Heart left ventricle (tissue), 16 donors: ENCODE measurements at regions of chr22 and their contacts with region 1.

Region 1: GRCh38 chr22:46071451-46072109 is 78.7 kb upstream of the PPARA start:
- DNase-seq: peak; percentile 95 to 96 (median 95)
- ATAC-seq: peak; percentile 11 to 53 (median 46)
- H3K4me3 ChIP-seq: peak overlapping the region; percentile 69 to 97 (median 90)
- H3K27ac ChIP-seq: peak overlapping the region; percentile 97 to 100 (median 98)
- H3K4me1 ChIP-seq: peaks cover 2 to 66% (median 41%) of the 10 kb centered on the region in 12 donors
- H3K27me3 ChIP-seq: no peaks in the 10 kb centered on the region
- CTCF ChIP-seq: no peak
- POLR2A ChIP-seq: peak; percentile 42 to 73

Region 2: DNA sequence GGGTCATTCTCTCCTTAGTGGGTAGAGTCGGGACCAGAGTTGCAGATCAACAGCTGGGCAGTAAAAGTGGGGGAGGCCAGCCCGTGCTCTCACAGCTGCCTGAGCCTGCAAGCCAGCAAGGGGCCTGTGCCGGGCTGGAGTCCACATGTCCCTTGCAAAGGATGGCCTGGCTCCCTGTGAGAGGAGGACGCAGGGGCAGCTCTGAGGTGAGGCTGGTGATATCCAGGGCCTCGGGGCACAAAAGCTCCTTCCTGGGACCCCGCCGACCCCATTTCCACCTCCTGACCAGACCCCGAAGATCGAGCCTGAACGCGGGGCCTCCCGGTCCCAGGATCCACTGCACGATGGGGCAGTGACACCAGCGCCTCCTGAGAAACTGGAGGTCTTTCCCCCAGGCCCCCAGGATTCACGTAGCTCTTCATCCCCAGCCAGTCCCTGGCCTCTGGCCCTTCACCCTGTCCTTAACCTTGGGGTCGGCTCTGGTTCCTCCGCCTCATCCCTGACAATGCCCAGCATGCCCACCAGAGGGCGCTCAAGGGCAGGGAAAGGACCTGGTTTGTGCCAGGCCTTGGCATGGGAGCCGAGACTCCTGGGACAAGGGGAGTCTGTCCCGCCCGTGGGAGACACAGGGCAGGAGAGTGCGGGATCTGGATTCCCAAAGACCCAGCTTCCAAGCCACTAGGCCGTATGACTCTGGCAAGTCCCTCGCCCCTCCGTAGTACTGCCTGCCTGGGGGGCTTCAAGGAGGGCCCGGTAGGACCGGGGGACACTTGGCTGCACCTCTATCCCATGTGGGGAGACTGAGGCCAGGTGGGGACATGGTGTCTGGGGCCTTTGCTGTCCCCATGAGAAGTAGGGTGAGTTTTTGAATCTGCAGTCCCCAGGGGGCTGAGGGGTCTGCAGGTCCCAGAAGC is 76.8 kb before region 1 on chr22:
- intact Hi-C with region 1: no loop called
- DNase-seq: peak; percentile 85 to 94 (median 87)
- ATAC-seq: peak; percentile 20 to 45 (median 43)
- H3K4me3 ChIP-seq: no peak overlapping the region
- H3K27ac ChIP-seq: peak overlapping the region in 9 of 12 donors; percentile 80 to 97 (median 92)
- H3K4me1 ChIP-seq: peaks cover 20 to 61% (median 48%) of the 10 kb centered on the region in 12 donors
- H3K27me3 ChIP-seq: no peaks in the 10 kb centered on the region
- CTCF ChIP-seq: peak; percentile 95 to 99 (median 98)
- POLR2A ChIP-seq: no peak

Region 3: DNA sequence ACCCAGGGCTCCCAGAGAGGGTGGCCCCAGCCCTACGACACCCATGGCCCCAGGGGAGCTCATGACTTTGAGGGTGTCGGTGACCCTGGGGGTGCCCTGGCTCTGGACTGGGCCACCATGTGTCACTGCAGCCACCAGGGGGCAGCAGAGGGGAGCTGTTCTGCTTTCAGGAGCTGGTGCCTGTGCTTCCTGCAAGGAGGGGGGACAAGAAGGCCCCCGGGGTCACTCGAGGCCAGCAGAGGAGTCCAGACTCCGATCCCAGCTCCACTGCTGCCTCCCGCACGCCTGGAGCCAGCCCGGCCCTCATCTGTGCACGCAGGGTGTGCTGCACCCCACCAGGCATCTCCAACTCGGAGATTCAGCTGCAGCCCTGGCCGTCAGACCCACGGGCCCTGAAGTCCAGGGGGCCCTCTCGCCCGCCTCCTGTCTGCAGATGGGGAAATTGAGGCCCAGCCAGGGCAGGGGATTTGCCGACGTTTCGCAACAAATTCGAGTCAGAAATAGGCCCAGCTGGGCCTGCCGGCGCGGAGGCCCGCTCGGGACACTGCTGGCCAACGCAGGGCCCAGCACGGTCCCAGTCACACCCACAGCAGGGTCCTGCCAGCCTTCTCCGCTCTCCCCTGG is 65.1 kb before region 1 on chr22:
- intact Hi-C with region 1: loop called in 8 of 10 experiments (anchors 5 kb)
- DNase-seq: peak; percentile 94 to 98 (median 96)
- ATAC-seq: peak; percentile 53 to 75 (median 68)
- H3K4me3 ChIP-seq: peak overlapping the region in 10 of 12 donors; percentile 9 to 52 (median 29)
- H3K27ac ChIP-seq: peak overlapping the region; percentile 74 to 100 (median 94)
- H3K4me1 ChIP-seq: peaks cover 5 to 64% (median 49%) of the 10 kb centered on the region in 12 donors
- H3K27me3 ChIP-seq: no peaks in the 10 kb centered on the region
- CTCF ChIP-seq: peak; percentile 94 to 99 (median 98)
- POLR2A ChIP-seq: no peak

Region 4: DNA sequence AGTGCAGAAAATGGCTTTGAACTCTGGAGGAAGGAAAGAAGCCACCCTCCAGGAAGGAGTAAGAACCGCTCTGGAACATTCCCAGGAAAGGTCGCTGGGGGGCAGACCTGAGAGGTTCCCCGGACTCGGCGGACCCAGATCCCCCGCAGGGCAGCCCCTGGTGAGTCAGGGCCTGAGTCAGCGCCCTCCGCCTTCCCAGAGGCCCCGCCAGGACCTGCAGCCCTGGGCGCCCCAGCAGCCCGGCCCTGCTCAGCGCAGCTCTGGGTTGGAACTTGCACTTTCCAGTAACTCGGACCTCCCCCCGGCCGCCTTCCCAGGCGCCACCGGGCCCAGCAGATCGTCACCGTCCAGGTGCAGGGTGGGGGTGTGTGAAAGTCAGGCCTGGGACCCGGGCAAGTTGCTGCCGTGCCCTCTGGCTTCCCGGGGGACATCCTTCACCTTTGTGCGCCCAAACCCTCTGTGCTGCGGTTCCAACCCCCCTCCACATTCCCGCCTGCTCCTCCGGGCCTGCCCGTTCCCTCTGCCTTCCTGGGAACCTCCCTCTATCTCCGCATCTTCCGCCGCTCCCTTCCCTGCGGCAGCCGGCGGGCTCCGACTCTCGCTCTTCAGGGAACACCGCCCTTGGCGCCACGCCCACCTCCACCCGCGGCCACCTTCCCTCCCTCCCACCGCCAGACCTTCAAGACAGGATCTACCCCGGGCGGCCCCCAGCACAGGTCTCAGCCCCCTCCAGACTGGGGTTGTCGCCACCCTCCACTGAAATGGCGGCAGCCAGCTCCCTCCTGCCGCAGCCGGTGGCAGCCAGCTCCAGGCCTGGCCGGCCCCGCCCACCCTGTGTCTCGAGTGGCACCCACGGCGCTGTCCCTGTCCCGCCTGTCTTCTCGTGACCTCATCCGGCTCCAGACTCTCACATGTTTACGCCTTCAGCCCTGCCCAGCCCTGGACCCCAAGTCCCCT is 57.8 kb before region 1 on chr22:
- intact Hi-C with region 1: loop called in 9 of 10 experiments (anchors 1 to 5 kb)
- DNase-seq: peak; percentile 92 to 98 (median 95)
- ATAC-seq: peak; percentile 92 to 97 (median 95)
- H3K4me3 ChIP-seq: peak overlapping the region; percentile 45 to 77 (median 64)
- H3K27ac ChIP-seq: peak overlapping the region; percentile 92 to 98 (median 96)
- H3K4me1 ChIP-seq: peaks cover 0 to 39% (median 23%) of the 10 kb centered on the region in 12 donors
- H3K27me3 ChIP-seq: no peaks in the 10 kb centered on the region
- CTCF ChIP-seq: peak; percentile 62 to 84 (median 71)
- POLR2A ChIP-seq: peak; percentile 4 to 24

Region 5: GRCh38 chr22:46035742-46036557 is 35.6 kb before region 1 on chr22:
- intact Hi-C with region 1: loop called in 4 of 10 experiments (anchors 2 to 5 kb)
- DNase-seq: peak; percentile 100
- ATAC-seq: peak; percentile 94 to 97 (median 96)
- H3K4me3 ChIP-seq: peak overlapping the region; percentile 35 to 86 (median 72)
- H3K27ac ChIP-seq: peak overlapping the region; percentile 87 to 99 (median 97)
- H3K4me1 ChIP-seq: peaks cover 3 to 29% (median 15%) of the 10 kb centered on the region in 12 donors
- H3K27me3 ChIP-seq: no peaks in the 10 kb centered on the region
- CTCF ChIP-seq: no peak
- POLR2A ChIP-seq: peak; percentile 57 to 96

Region 6: DNA sequence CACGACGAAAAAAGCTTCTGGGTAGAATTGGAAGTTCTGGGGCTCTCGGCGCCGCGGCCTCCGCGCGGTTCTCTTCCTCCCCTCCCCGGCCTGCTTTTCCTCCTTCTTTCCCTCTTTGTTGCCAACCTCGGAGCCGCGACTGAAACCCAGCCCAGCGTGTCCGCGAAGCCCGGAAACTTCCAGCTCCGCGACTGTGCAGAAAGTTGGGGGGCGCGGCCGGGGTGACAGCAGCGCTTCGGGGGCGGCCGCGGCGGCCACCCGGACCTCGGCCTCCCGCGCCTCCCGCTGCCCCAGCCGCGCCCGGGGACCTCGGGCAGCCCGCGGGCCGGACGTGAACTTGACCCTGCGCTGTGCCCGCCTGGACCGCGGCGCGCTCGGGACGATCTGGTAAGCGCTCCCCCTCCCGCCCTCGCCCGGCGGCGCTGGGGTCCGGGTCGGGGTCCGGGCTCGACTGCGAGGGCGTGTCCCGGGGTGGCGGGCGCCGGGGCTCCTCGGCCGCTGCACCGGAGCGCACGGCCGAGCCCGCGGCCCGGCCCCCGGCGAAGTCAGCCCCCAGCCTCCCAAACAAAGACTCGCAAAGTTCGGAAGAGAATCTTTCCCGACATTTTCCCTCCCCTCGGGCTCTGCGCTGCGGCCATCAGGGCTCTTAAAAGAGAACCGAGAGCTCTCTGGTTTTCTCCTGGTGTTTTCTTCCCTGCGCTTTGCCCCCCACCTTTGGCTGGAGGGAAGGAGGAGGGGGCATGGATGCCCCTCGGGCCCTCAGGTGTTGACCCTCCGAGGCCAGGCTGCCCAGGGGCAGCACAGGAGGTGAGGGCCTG is 26.8 kb before region 1 on chr22:
- intact Hi-C with region 1: loop called in 1 of 10 experiments (anchors 1 kb)
- DNase-seq: peak in 3 of 5 donors; percentile 64 to 85 (median 76)
- ATAC-seq: peak in 3 of 4 donors; percentile 37 to 43 (median 41)
- H3K4me3 ChIP-seq: peak overlapping the region; percentile 32 to 75 (median 62)
- H3K27ac ChIP-seq: peak overlapping the region; percentile 91 to 100 (median 95)
- H3K4me1 ChIP-seq: peaks cover 0 to 80% (median 55%) of the 10 kb centered on the region in 12 donors
- H3K27me3 ChIP-seq: no peaks in the 10 kb centered on the region
- CTCF ChIP-seq: no peak
- POLR2A ChIP-seq: no peak

Region 7: DNA sequence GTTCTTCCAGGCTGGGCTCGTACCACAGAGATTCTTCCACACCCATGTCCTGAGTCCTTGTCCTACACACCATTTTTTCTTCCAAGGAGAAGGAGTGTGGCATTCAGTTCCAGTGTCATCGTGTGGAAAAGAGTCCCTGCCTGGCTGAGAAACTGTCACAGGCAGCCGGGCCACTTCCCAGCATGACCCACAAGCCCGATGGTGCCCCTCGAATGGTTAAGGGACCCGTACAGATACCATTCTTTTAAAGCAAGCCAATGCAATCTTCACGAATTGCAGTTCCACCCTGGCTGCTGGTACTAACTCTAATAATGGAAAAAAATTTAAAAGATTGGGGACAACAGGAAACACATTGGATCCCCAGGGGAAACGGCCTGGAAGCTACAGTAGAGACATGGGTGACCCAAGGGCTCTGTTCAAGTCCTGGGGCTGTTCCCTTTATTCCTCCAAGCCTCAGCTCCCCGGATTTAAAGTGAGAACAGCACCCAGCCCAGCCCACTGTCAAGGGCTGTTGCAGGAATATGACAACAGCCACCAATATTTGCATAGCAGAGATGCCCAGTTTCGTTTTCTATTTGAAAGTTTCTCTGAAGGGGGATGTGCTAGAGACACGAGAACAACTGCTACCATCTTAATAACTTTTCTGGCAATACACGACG is 13.7 kb before region 1 on chr22:
- intact Hi-C with region 1: loop called in 3 of 10 experiments (anchors 2 kb)
- DNase-seq: peak; percentile 53 to 74 (median 66)
- ATAC-seq: peak in 3 of 4 donors; percentile 10 to 40 (median 10)
- H3K4me3 ChIP-seq: peak overlapping the region in 11 of 12 donors; percentile 2 to 89 (median 73)
- H3K27ac ChIP-seq: peak overlapping the region; percentile 98 to 100 (median 100)
- H3K4me1 ChIP-seq: peaks cover 15 to 90% (median 74%) of the 10 kb centered on the region in 12 donors
- H3K27me3 ChIP-seq: no peaks in the 10 kb centered on the region
- CTCF ChIP-seq: no peak
- POLR2A ChIP-seq: peak in 1 of 2 donors; percentile 50

Region 8: DNA sequence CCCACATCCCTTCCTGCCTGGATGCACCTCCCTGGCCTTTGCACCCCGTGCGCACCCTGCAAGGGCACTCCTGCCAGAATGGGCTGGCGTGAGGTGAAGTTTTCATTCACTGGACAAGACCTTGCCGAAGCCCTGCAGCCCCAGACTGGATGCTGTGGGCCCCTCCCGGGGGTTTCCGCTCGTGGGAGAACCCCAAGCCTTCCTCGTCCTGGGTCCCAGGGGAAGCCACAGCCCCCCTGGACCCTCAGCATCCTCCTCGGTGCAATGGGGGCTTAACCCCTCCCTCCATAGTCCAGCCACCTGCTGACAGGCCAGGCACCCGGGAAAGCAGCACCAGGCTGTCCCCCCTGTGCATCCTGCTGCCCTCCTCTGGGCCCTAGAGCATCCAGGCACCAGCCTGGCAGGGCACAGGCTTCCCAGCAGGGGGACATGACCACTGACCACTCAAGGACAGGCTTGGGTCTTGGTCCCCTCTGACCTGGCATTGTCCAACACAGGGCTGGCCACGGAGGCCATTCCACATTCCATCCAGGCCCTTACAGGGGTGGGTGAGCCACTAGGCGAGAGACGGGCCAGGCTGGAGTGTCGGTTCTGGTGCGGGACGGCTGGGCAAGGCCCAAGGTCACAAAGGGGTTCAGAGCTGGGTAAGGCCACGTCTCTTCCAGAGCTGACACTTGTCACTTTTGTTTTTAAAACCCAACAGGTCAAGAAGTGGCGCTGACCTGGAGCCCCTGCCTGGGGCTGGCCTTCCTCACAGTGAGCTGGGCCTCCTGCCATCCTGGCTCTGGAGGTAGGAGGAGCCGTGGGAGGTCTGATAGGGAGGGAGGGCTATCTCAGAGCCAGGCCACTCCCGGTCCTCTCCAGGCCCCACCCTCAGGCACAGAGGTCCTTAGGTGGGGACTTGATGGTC is 37.2 kb after region 1 on chr22:
- intact Hi-C with region 1: loop called in 8 of 10 experiments (anchors 2 to 5 kb)
- DNase-seq: peak in 4 of 5 donors; percentile 75 to 80 (median 75)
- ATAC-seq: peak; percentile 37 to 52 (median 48)
- H3K4me3 ChIP-seq: no peak overlapping the region
- H3K27ac ChIP-seq: peak overlapping the region; percentile 45 to 88 (median 82)
- H3K4me1 ChIP-seq: peaks cover 46 to 100% (median 97%) of the 10 kb centered on the region in 12 donors
- H3K27me3 ChIP-seq: no peaks in the 10 kb centered on the region
- CTCF ChIP-seq: peak in 1 of 12 donors; percentile 8
- POLR2A ChIP-seq: no peak